Ascending aorta (tissue), 2 donors: ENCODE measurements at regions of chr11 and their contacts with region 1.

Region 1: DNA sequence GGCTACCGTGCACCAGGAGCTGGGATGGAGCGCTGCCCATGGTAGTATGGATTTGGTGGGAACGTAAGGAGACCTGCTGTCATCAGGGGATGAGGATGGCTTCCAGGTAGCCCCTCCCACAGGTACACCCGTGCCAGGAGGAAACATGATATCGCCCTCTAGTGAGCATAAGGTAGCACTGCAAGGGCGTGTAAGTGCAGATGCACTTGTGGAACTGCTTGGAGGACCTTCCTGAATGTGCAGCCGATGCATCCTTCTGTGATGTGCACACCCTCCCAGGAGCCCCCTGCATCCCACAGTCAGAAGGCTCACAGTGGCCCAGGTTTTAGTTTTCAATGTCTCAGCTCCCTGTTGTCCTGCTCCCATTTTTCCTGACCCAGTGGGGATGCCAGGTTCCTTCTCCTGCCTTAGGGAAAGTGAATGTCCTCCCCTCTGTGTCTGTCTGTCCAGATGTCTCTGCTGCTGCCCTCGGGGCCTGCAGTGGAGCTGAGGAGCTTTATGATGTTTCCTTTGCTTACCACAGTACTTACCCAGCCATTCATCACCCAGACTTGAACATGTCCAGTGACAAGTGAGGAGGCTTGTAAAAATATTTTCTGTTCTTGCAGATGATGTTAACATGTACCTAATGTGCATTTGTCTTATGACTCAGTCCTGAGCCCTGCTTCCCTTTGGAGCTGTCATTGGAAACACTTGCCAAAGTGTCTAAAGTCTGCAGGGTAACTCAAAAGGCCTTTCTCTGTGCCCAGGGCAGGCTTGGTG is 49.2 kb downstream of the DBX1 start:
- DNase-seq: no peak
- H3K4me3 ChIP-seq: no peak overlapping the region
- H3K27ac ChIP-seq: peak overlapping the region; percentile 73 to 85
- H3K4me1 ChIP-seq: peaks cover 20 to 51% of the 10 kb centered on the region in 2 donors
- H3K27me3 ChIP-seq: no peaks in the 10 kb centered on the region
- CTCF ChIP-seq: peak; percentile 35 to 80 (median 66)

Region 2: DNA sequence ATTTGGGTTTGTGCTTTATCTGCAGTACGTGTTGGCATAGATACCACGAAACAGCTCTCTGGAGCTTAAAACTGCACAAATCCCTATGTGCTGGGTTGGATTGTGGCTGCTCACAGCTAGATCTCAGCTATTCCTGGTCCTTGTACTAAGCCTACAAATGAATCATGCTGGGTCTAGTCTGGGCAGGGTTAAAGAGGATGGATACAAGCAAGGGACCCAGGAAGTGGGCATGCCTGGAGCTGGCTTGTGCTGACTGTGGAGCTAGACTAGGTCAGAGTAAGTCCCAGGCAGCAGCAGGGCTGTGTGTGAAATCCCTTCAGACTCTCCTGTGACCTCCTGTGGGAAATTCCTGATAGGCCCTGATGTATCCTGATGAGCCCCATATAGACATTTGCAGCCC is 866.5 kb before region 1 on chr11:
- intact Hi-C with region 1: no loop called
- DNase-seq: no peak
- H3K4me3 ChIP-seq: no peak overlapping the region
- H3K27ac ChIP-seq: no peak overlapping the region
- H3K4me1 ChIP-seq: peaks cover 13 to 17% of the 10 kb centered on the region in 2 donors
- H3K27me3 ChIP-seq: peaks cover 28% of the 10 kb centered on the region
- CTCF ChIP-seq: no peak

Region 3: DNA sequence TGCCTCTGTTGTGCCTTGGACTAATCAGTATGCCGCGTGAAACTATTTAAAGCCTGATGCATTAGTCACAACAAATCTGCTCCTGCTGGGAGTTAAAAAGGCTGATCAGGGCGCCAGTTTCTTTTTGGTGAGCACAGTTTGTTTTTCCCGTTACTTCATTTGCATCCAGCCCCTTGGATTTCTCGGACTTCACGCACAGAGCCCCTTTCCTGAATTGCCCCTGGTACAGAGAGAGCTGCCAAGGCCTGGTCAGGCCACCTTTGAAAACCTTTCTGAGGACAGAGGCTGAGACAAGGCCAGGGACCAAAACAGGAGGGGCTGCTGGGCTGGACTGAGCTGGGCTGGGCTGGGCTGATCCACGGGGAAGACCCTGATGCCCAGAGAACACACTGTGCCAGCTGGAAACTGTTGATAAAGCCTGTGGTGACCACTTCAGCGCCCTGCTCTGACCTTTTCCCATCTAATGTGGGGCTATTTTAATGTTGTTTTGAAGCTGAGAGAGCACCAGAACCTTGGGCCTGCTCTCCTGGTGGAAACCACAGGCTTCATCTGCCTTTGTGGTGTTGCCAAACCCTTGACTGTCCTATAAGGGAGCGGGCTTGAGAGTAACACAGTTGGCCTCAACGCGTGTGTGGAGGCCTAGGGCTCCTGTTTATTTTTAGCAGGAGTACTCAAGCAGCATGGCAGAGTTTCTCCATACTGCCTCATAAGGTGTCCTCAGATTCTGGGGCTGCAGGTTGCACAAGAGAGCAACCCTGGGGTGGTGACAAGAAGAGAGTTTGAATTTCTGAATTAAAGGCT is 354.2 kb before region 1 on chr11:
- intact Hi-C with region 1: loop called (anchors 10 kb)
- DNase-seq: peak; percentile 30 to 73
- H3K4me3 ChIP-seq: peak overlapping the region in 1 of 2 donors; percentile 0
- H3K27ac ChIP-seq: peak overlapping the region; percentile 79 to 81
- H3K4me1 ChIP-seq: peaks cover 13 to 62% of the 10 kb centered on the region in 2 donors
- H3K27me3 ChIP-seq: no peaks in the 10 kb centered on the region
- CTCF ChIP-seq: no peak

Region 4: DNA sequence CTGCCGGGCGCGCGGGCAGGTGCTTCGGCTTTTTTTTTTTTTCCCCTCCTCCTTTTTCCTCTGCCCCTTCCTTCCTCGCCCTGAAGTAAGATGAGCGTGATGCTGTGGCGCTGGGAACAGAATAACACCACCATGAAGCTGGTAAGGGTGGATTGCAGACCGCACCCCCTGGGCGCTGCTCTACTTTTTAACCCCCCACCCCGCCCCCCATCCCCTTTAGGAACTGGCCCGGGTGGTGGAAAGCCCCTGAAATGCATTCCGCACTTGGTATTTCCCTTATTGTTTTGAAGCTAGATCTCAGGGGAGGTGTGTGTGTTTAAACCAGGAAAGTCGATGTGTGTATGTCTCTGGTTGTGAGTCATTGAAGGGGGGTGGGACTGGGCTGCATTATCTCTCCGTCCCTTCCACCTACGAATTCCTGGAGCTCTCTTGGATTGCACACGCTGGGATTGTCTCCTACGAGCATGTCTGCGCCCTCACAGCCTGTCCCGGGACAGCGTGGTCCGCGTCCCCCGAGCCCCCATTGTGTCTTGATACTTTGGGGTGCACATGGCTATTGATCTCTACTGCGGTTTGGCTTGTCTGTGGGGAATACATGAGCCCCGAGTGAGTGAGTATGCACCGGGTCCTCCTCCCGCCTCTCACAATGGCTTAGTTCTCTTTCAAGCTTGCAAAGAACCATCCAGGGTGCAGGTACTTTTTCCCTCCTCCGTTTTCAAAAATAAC is 333.5 kb before region 1 on chr11:
- intact Hi-C with region 1: no loop called
- DNase-seq: no peak
- H3K4me3 ChIP-seq: peak overlapping the region; percentile 52 to 60
- H3K27ac ChIP-seq: peak overlapping the region; percentile 2 to 27
- H3K4me1 ChIP-seq: peaks cover 21 to 45% of the 10 kb centered on the region in 2 donors
- H3K27me3 ChIP-seq: no peaks in the 10 kb centered on the region
- CTCF ChIP-seq: no peak

Region 5: GRCh38 chr11:19919050-19919561 is 192.0 kb before region 1 on chr11:
- intact Hi-C with region 1: loop called (anchors 5 kb)
- DNase-seq: peak; percentile 58 to 92
- H3K4me3 ChIP-seq: no peak overlapping the region
- H3K27ac ChIP-seq: peak overlapping the region; percentile 70 to 80
- H3K4me1 ChIP-seq: peaks cover 31 to 54% of the 10 kb centered on the region in 2 donors
- H3K27me3 ChIP-seq: no peaks in the 10 kb centered on the region
- CTCF ChIP-seq: no peak

Region 6: GRCh38 chr11:19951558-19952115 is 159.5 kb before region 1 on chr11:
- intact Hi-C with region 1: loop called (anchors 5 kb)
- DNase-seq: no peak
- H3K4me3 ChIP-seq: peak overlapping the region in 1 of 2 donors; percentile 7
- H3K27ac ChIP-seq: peak overlapping the region in 1 of 2 donors; percentile 67
- H3K4me1 ChIP-seq: peaks cover 14 to 42% of the 10 kb centered on the region in 2 donors
- H3K27me3 ChIP-seq: no peaks in the 10 kb centered on the region
- CTCF ChIP-seq: peak; percentile 56 to 65 (median 62)

Region 7: GRCh38 chr11:20097319-20098221 is 13.5 kb before region 1 on chr11:
- intact Hi-C with region 1: loop called (anchors 2 kb)
- DNase-seq: peak in 1 of 2 donors; percentile 76
- H3K4me3 ChIP-seq: no peak overlapping the region
- H3K27ac ChIP-seq: peak overlapping the region; percentile 88 to 91
- H3K4me1 ChIP-seq: peaks cover 12 to 50% of the 10 kb centered on the region in 2 donors
- H3K27me3 ChIP-seq: no peaks in the 10 kb centered on the region
- CTCF ChIP-seq: no peak